ENCODE measurements at regions of chr6 and their contacts with region 1.

Region 1: GRCh38 chr6:37018198-37019064 is 13.0 kb downstream of the FGD2 start:
- DNase-seq: peak; percentile 87
- ATAC-seq: peak; percentile 99
- H3K4me3 ChIP-seq: no peak overlapping the region
- H3K27ac ChIP-seq: no peak overlapping the region
- H3K4me1 ChIP-seq: no peaks in the 10 kb centered on the region; the same call in 1 of the 2 replicates
- H3K27me3 ChIP-seq: no peaks in the 10 kb centered on the region
- CTCF ChIP-seq: peak; percentile 97
- POLR2A ChIP-seq: no peak
- RAD21 ChIP-seq: peak; percentile 96

Region 2: GRCh38 chr6:36929607-36930006 is 88.8 kb before region 1 on chr6:
- CTCF ChIA-PET with region 1: no interaction called
- POLR2A ChIA-PET with region 1: no interaction called
- dilution Hi-C with region 1: no loop called
- in situ Hi-C with region 1: no loop called
- intact Hi-C with region 1: no loop called
- DNase-seq: peak; percentile 82
- ATAC-seq: peak; percentile 64
- H3K4me3 ChIP-seq: no peak overlapping the region
- H3K27ac ChIP-seq: no peak overlapping the region
- H3K4me1 ChIP-seq: peaks cover 31% of the 10 kb centered on the region
- H3K27me3 ChIP-seq: no peaks in the 10 kb centered on the region
- CTCF ChIP-seq: no peak
- POLR2A ChIP-seq: no peak
- RAD21 ChIP-seq: no peak

Region 3: GRCh38 chr6:37005061-37005810 is 13.2 kb before region 1 on chr6 and contains the start of gene FGD2:
- CTCF ChIA-PET with region 1: interaction called, 13 read pairs
- POLR2A ChIA-PET with region 1: no interaction called
- dilution Hi-C with region 1: no loop called
- in situ Hi-C with region 1: no loop called
- intact Hi-C with region 1: no loop called
- DNase-seq: no peak
- ATAC-seq: no peak
- H3K4me3 ChIP-seq: no peak within 1 kb of the TSS
- H3K27ac ChIP-seq: no peak within 1 kb of the TSS
- H3K4me1 ChIP-seq: no peaks in the 10 kb centered on the region; the same call in 1 of the 2 replicates
- H3K27me3 ChIP-seq: peaks cover 19% of the 10 kb centered on the region
- CTCF ChIP-seq: no peak
- POLR2A ChIP-seq: no peak
- RAD21 ChIP-seq: no peak
- total RNA-seq, gene FGD2: not detected in 2 replicates

Measured in IMR-90 (cell line).